B cell (primary cell): ENCODE measurements at regions of chr16 and their contacts with region 1.

Region 1: DNA sequence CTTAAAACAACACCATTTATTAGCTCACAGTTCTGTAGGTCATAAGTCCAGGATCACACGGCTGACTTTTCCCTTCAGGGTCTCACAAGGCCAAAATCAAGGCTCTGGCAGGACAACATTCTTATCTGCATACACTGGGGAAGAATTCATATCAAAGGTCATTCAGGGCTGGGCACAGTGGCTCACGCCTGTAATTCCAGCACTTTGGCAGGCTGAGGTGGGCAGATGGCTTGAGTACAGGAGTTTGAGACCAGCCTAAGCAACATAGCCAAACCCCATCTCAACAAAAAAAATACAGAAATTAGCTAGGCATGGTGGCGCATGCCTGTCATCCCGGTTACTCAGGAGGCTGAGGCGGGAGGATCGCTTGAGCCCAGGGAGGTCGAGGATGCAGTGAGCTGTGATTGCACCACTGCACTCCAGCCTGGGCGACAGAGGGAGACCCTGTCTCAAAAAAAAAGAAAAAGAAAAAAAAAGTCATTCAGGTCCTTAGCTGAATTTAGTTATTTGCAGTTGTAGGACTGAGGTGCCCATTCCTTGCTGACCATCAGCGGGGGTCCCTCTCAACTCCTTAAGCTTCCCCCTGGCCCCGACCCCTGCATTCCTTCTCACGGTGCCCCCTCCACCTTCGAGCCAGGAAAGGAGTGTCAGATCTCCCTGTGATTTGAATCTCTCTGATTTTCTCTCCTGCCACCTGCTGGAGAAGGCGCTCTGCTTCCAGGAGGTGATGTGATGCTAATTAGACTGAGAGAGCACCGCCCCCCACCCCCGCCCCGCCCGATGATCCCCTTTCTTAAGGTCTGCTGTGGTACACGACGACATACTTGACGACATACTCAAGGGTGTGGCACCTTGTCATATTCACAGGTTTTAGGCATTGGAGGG is 91.8 kb upstream of the CLEC18A start:
- DNase-seq: peak; percentile 16
- ATAC-seq: no peak
- H3K4me3 ChIP-seq: no peak overlapping the region
- H3K4me3 Mint-ChIP-seq: no peak overlapping the region
- H3K27ac ChIP-seq: no peak overlapping the region
- H3K27ac Mint-ChIP-seq: no peak overlapping the region
- H3K4me1 ChIP-seq: no peaks in the 10 kb centered on the region
- H3K4me1 Mint-ChIP-seq: no peaks in the 10 kb centered on the region
- H3K27me3 ChIP-seq: no peaks in the 10 kb centered on the region
- H3K27me3 Mint-ChIP-seq: no peaks in the 10 kb centered on the region
- CTCF ChIP-seq: no peak

Region 2: DNA sequence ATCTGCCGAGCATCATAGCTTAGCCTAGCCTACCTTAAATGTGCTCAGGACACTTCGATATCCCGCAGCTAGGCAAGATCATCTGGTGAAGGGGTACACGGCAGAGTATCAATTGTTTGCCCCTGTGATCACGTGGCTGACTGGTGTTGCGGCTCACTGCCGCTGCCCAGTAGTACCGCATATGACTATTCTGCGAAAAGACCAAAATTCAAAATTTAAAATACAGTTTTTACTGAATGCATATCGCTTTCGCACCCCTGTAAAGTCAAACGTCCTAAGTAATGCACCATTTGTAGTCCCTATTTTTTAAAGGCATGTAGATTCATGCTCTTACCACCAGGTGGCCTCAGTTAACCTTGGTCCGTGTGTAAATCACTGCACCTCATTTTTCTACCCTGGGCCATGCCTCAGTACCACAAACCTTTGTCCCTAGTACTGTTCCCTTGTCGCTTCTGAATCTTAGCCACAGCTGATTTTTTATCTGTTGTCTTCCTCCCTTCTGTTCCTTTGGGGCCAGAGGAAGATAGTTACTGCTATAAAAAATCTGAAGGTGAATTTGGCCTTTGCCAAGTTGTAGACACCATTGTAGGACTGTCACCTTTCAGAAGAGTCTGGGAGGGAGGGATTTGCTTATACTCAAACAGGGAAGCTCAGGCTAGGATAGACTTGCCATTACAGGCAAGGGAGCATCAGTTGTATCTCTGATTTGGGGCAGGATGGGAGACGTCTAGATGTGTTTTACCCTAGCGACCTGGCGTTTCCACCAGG is 62.8 kb before region 1 on chr16:
- CTCF ChIA-PET with region 1: interaction called, 3 read pairs
- POLR2A ChIA-PET with region 1: no interaction called
- intact Hi-C with region 1: loop called (anchors 2 kb)
- DNase-seq: peak; percentile 66
- ATAC-seq: peak; percentile 77
- H3K4me3 ChIP-seq: no peak overlapping the region
- H3K4me3 Mint-ChIP-seq: no peak overlapping the region
- H3K27ac ChIP-seq: no peak overlapping the region
- H3K27ac Mint-ChIP-seq: no peak overlapping the region
- H3K4me1 ChIP-seq: no peaks in the 10 kb centered on the region
- H3K4me1 Mint-ChIP-seq: peaks cover 11% of the 10 kb centered on the region
- H3K27me3 ChIP-seq: no peaks in the 10 kb centered on the region
- H3K27me3 Mint-ChIP-seq: no peaks in the 10 kb centered on the region
- CTCF ChIP-seq: peak; percentile 96